IMR-90 (cell line): ENCODE measurements at regions of chr6 and their contacts with region 1.

Region 1: GRCh38 chr6:122789182-122790027 is at the start of gene SMPDL3A:
- DNase-seq: peak; percentile 64
- ATAC-seq: peak; percentile 80
- H3K4me3 ChIP-seq: peak within 1 kb of the TSS; percentile 63
- H3K27ac ChIP-seq: peak within 1 kb of the TSS; percentile 98
- H3K4me1 ChIP-seq: peaks cover 9% of the 10 kb centered on the region
- H3K27me3 ChIP-seq: no peaks in the 10 kb centered on the region
- CTCF ChIP-seq: peak; percentile 39
- POLR2A ChIP-seq: peak; percentile 63
- RAD21 ChIP-seq: no peak
- total RNA-seq, gene SMPDL3A: 9.7 and 9.9 TPM in 2 replicates

Region 2: DNA sequence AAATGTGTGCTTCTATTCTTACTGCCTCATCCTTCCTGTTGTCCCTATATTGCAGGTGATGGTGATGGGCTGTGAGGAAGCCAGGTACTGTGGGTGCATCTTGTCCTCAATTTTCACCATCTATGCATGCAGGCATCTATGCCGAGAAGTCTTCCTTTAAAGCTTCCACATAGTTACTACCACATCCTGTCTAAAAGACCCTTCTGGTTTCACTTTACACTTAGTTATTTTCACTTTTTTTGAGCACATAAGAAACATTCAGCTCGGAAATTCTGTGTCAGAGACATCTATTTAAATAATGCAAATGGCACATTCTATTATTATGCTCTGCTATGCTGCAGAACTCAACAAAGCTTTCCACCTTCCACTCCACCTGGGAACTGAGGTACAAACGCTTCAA is 38.1 kb before region 1 on chr6:
- CTCF ChIA-PET with region 1: interaction called, 3 read pairs
- POLR2A ChIA-PET with region 1: no interaction called
- dilution Hi-C with region 1: no loop called
- in situ Hi-C with region 1: no loop called
- intact Hi-C with region 1: loop called (anchors 5 kb)
- DNase-seq: no peak
- ATAC-seq: no peak
- H3K4me3 ChIP-seq: no peak overlapping the region
- H3K27ac ChIP-seq: no peak overlapping the region
- H3K4me1 ChIP-seq: peaks cover 2% of the 10 kb centered on the region; the same call in 1 of the 2 replicates
- H3K27me3 ChIP-seq: no peaks in the 10 kb centered on the region; the same call in none of the 2 replicates
- CTCF ChIP-seq: no peak
- POLR2A ChIP-seq: no peak
- RAD21 ChIP-seq: no peak

Region 3: GRCh38 chr6:122803171-122803661 is 13.8 kb after region 1 on chr6:
- CTCF ChIA-PET with region 1: interaction called, 6 read pairs
- POLR2A ChIA-PET with region 1: interaction called, 4 read pairs
- dilution Hi-C with region 1: no loop called
- in situ Hi-C with region 1: no loop called
- intact Hi-C with region 1: loop called (anchors 1 kb)
- DNase-seq: peak; percentile 80
- ATAC-seq: peak; percentile 42
- H3K4me3 ChIP-seq: no peak overlapping the region
- H3K27ac ChIP-seq: peak overlapping the region; percentile 74; the same call in 1 of the 2 replicates
- H3K4me1 ChIP-seq: peaks cover 32% of the 10 kb centered on the region
- H3K27me3 ChIP-seq: no peaks in the 10 kb centered on the region
- CTCF ChIP-seq: no peak
- POLR2A ChIP-seq: no peak
- RAD21 ChIP-seq: no peak

Region 4: GRCh38 chr6:122839477-122839876 is 50.1 kb after region 1 on chr6:
- CTCF ChIA-PET with region 1: interaction called, 8 read pairs
- POLR2A ChIA-PET with region 1: interaction called, 3 read pairs
- dilution Hi-C with region 1: no loop called
- in situ Hi-C with region 1: no loop called
- intact Hi-C with region 1: loop called (anchors 1 kb)
- DNase-seq: peak; percentile 50
- ATAC-seq: peak; percentile 96
- H3K4me3 ChIP-seq: no peak overlapping the region
- H3K27ac ChIP-seq: no peak overlapping the region
- H3K4me1 ChIP-seq: no peaks in the 10 kb centered on the region
- H3K27me3 ChIP-seq: no peaks in the 10 kb centered on the region
- CTCF ChIP-seq: peak; percentile 79
- POLR2A ChIP-seq: no peak
- RAD21 ChIP-seq: peak; percentile 67

Region 5: DNA sequence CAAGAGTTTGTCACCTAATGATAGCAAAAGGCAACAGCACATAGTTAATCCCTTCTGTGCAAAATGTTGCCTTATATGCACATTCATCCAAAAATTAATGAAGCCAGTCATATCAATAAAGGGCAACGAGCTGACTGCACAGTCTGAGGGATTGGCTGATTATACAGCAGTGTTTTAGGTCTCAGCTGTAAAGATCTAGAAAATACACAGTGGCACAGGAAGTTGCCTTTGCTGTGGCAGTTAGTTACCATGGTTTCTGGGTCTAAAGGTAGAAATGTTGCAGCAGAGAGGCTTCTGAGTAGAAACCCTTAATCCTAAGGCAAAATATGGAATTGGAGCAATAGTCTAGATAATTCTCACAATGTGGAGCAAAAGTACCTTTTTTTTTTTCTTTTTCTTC is 89.4 kb after region 1 on chr6:
- CTCF ChIA-PET with region 1: no interaction called
- POLR2A ChIA-PET with region 1: no interaction called
- dilution Hi-C with region 1: no loop called
- in situ Hi-C with region 1: no loop called
- intact Hi-C with region 1: no loop called
- DNase-seq: no peak
- ATAC-seq: no peak
- H3K4me3 ChIP-seq: no peak overlapping the region
- H3K27ac ChIP-seq: no peak overlapping the region
- H3K4me1 ChIP-seq: no peaks in the 10 kb centered on the region
- H3K27me3 ChIP-seq: no peaks in the 10 kb centered on the region
- CTCF ChIP-seq: no peak
- POLR2A ChIP-seq: no peak
- RAD21 ChIP-seq: no peak